ENCODE measurements at regions of chr5 and their contacts with region 1.

Region 1: DNA sequence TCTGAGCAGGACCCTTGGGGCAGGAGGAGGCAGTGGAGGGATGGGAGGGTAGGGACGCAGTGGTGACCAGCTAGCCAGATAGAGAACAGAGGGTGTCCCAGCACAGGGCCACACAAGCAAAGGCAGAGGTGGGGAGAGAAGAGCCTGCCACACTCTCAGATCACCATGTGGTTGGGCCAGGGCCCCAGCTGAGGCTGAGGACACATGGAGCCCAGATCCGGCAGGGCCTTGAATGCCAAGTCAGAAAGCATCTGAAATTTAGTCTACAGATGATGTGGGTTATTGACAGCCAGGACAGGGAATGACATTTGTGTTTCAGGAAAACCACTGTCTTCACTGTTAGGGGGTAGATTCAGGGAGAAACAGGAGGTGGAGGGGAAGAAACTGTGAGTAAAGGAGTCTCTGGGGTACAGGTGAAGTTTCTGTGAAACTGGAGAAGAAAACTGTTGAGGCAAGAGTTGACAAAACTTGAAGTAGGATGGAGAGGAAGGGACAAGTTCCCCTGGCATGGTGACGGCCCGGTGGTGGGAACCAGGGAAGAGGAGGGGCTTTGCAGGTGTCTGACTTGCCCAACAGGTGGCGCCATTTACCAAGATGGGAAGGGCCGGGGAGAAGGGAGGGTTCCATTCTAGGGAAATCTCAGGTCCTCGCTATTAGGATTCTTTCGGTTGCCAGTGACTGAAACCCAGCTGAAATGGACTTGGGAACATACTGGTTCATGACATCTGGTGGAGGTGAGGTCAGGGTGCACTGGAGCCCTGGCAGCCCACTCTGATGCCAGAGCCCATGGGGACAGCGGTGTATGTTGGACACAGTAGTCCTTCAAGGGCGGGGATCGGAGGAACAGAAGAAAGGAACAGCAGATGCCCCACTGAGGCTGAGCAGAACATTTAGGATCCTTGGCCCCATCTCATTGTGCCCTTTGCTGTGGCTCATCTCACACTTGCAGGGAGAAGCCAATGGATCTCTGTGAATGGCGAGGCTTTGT is 100.1 kb downstream of the KCNIP1 start:
- DNase-seq: peak; percentile 34
- H3K4me3 ChIP-seq: no peak overlapping the region
- H3K27ac ChIP-seq: no peak overlapping the region
- H3K4me1 ChIP-seq: no peaks in the 10 kb centered on the region
- H3K27me3 ChIP-seq: peaks cover 0 to 2% of the 10 kb centered on the region in 2 experiments
- CTCF ChIP-seq: peak; percentile 65 to 77
- POLR2A ChIP-seq: no peak

Region 2: DNA sequence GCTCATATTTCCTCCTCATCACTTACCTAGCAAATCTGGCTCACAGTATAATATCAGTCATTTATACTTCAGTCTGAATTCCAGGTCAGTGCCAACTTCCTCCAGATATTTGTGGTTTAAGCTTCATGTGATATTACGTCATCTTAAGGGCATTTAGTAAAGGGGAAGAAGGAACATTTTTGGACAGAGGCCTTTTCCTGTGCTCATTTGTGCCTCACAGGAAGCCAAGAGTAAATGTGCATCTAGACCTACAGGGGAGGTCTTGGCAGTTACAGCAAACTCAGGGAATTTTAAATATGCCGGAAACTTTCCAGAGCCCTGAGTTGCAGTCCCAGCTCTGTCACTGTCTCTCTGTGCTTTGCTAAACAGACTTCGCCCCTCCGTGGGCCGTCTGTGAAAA is 112.4 kb before region 1 on chr5:
- CTCF ChIA-PET with region 1: no interaction called
- POLR2A ChIA-PET with region 1: no interaction called
- dilution Hi-C with region 1: no loop called
- intact Hi-C with region 1: loop called (anchors 5 kb)
- DNase-seq: peak; percentile 91
- H3K4me3 ChIP-seq: no peak overlapping the region
- H3K27ac ChIP-seq: peak overlapping the region; percentile 75
- H3K4me1 ChIP-seq: peaks cover 15% of the 10 kb centered on the region
- H3K27me3 ChIP-seq: no peaks in the 10 kb centered on the region
- CTCF ChIP-seq: no peak
- POLR2A ChIP-seq: peak; percentile 25

Region 3: DNA sequence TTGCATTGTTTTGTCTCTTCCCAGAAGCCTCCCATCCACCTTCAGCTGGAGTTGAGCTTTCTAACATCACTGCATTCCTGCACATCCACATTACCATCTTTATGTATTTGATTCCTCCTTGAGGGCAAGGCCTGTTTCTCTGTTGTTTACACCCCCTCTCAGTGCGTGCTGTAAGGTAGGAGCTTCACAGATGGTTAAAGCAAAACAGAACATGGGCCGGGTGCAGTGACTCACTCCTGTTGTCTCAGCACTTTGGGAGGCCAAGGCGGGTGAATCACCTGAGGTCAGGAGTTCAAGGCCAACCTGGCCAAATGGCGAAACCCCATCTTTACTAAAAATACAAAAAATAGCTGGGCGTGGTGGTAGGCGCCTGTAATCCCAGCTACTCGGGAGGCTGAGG is 10.8 kb after region 1 on chr5:
- CTCF ChIA-PET with region 1: interaction called, 23 read pairs
- POLR2A ChIA-PET with region 1: no interaction called
- dilution Hi-C with region 1: no loop called
- intact Hi-C with region 1: no loop called
- DNase-seq: no peak
- H3K4me3 ChIP-seq: no peak overlapping the region
- H3K27ac ChIP-seq: no peak overlapping the region
- H3K4me1 ChIP-seq: no peaks in the 10 kb centered on the region
- H3K27me3 ChIP-seq: peaks cover 2 to 5% of the 10 kb centered on the region in 2 experiments
- CTCF ChIP-seq: no peak
- POLR2A ChIP-seq: no peak

Region 4: GRCh38 chr5:170623576-170624181 is 19.8 kb after region 1 on chr5:
- CTCF ChIA-PET with region 1: interaction called, 7 read pairs
- POLR2A ChIA-PET with region 1: no interaction called
- dilution Hi-C with region 1: no loop called
- intact Hi-C with region 1: loop called (anchors 1 kb)
- DNase-seq: peak; percentile 61
- H3K4me3 ChIP-seq: no peak overlapping the region
- H3K27ac ChIP-seq: no peak overlapping the region
- H3K4me1 ChIP-seq: no peaks in the 10 kb centered on the region
- H3K27me3 ChIP-seq: peaks cover 2 to 3% of the 10 kb centered on the region in 2 experiments
- CTCF ChIP-seq: peak; percentile 74 to 87
- POLR2A ChIP-seq: no peak

Region 5: GRCh38 chr5:170791325-170791954 is 187.6 kb after region 1 on chr5:
- CTCF ChIA-PET with region 1: interaction called, 3 read pairs
- POLR2A ChIA-PET with region 1: no interaction called
- dilution Hi-C with region 1: no loop called
- intact Hi-C with region 1: loop called (anchors 1 kb)
- DNase-seq: peak; percentile 66
- H3K4me3 ChIP-seq: no peak overlapping the region
- H3K27ac ChIP-seq: no peak overlapping the region
- H3K4me1 ChIP-seq: no peaks in the 10 kb centered on the region
- H3K27me3 ChIP-seq: no peaks in the 10 kb centered on the region
- CTCF ChIP-seq: peak; percentile 64 to 69
- POLR2A ChIP-seq: no peak

Measured in endothelial cell of umbilical vein (primary cell).